Ovary (tissue), 10 donors: ENCODE measurements at regions of chr3 and their contacts with region 1.

Region 1: DNA sequence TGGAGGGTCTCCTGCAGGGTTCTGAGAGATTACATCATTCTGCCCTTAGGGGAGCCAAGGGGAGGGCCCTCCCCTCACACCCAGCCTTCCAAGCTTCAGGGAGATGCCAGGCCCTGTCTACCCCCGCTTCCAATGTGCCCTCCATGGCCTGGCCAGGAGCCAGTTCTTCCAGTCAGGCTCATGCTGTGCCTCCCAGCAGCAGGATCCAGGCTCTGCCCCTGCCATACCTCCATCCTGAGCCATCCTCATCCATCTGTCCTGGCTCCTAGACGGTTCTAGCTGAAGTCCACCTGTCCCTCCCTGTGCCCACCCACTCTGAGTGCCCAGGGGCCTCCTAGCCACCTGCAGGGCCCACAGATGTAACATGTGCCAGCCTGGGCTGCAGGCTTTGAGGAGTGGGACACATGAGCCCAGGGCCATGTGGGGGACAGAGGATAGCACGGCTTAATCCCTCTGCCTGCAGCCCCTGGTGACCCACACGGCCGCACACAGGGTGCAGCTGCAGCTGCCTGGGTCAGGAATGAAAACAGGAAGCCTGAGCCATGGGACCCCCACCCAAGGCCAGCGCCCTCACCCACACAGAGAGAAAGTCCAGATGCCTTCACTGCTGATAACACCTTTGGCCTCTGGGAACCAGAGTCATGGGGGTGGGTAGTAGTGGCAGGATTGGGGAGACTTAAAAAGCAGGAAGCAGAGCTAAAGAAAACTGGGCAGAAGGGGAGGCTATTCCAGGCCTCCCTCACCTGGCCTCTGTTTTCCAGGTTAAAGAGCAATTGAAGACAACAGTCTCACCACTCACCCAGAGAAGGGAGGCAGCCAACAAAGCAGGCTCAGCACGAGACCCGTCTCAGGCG is 11.8 kb downstream of the PLCD1 start:
- DNase-seq: peak in 3 of 5 donors; percentile 11 to 38 (median 33)
- H3K4me3 ChIP-seq: no peak overlapping the region
- H3K27ac ChIP-seq: no peak overlapping the region
- H3K4me1 ChIP-seq: peaks cover 15% of the 10 kb centered on the region
- H3K27me3 ChIP-seq: no peaks in the 10 kb centered on the region
- CTCF ChIP-seq: no peak
- EP300 ChIP-seq: no peak
- POLR2A ChIP-seq: no peak

Region 2: DNA sequence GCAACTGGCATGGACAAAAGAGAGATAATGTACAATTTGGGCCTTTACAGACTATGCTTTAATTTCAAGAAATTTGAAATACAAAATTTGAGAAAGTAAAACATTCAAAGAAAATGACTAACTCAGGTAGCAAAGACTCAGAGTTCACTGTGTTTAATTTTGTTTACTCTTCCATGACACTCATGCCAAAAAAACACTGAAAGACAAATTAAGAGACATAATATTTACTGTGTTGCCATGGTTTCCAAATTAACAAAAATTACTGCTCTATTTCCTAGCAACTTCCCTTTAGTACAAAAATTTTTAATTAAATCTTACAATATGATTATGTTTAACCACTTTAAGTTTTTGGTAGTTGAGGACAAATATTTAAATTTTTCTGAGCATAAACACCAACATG is 872.9 kb before region 1 on chr3:
- intact Hi-C with region 1: loop called in 1 of 4 experiments (anchors 5 kb)
- DNase-seq: no peak
- H3K4me3 ChIP-seq: no peak overlapping the region
- H3K27ac ChIP-seq: no peak overlapping the region
- H3K4me1 ChIP-seq: peaks cover 5% of the 10 kb centered on the region
- H3K27me3 ChIP-seq: no peaks in the 10 kb centered on the region
- CTCF ChIP-seq: no peak
- EP300 ChIP-seq: no peak
- POLR2A ChIP-seq: no peak